ENCODE measurements at regions of chr16 and their contacts with region 1.

Region 1: DNA sequence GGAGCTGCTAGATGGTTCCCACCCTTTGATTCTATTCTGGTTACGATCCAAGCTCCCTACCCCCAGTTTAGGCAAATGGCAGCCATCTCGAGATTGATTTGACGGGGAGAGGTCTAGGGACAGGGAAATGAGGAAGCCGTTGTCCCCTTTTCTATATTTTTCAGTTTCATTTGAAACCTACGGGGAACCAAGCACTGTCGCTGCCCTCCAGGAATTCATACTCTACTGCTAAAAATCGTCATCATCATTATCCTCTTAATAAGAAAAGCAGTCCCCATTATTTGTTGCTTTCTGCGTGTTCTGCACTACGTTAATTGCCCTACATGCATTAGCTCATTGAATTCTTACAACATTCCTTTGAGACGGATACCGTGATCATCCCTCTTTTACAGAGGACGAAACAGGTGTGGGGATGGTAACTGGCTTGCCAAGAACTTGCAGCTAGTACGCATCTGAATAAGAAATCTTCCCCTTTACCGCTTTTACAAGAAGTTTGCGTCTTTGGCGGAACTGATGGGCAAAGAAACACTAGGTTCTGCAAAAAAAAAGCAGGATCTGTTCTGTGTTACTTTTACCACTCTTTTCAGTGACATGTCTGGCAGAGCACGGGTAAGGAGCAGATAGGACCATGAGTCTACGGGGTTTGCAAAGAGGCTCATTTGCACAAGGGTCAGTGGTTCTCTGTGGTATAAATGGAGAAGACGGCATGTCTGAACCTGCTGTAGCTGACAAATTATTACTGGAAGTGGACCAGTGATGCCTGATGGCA is 1.1 kb downstream of the CCP110 start:
- DNase-seq: peak; percentile 26

Region 2: GRCh38 chr16:19113453-19114351 is 411.1 kb before region 1 on chr16 and contains the start of gene ITPRIPL2:
- in situ Hi-C with region 1: loop called (anchors 25 kb)
- DNase-seq: peak; percentile 95
- total RNA-seq, gene ITPRIPL2: 19.7 and 29.0 TPM in 2 replicates

Measured in Caki2 (cell line).